Ovary (tissue), 10 donors: ENCODE measurements at regions of chr22 and their contacts with region 1.

Region 1: DNA sequence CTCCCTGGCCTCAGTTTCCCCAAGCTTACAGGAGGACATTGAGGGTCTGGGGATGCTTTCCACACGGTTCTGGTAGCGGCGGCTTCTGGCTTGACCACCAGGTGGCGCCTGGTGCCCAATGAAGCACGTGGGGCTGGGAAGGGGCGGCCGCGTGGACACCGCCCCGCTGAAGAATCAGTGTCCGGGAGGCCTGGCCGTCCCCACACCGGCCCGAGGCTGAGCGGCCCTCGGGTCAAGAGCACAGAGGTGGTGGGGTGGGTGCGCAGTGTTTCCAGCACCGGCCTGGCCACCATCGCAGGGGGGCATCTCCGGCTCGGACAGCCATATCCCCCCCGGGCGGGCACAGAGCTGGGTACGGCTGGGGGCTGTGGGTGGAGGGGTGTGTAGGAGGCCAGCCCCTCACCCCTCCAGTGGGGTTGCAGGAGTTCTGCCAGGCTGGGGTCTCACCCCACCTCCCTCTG is 27.8 kb upstream of the PPARA start:
- DNase-seq: peak; percentile 80 to 91 (median 88)
- H3K4me3 ChIP-seq: no peak overlapping the region
- H3K27ac ChIP-seq: peak overlapping the region in 1 of 2 donors; percentile 51
- H3K4me1 ChIP-seq: peaks cover 19% of the 10 kb centered on the region
- H3K27me3 ChIP-seq: no peaks in the 10 kb centered on the region
- CTCF ChIP-seq: peak; percentile 97 to 99 (median 97)
- EP300 ChIP-seq: no peak
- POLR2A ChIP-seq: peak; percentile 29

Region 2: GRCh38 chr22:46267431-46268279 is 145.1 kb after region 1 on chr22 and contains the start of gene TTC38:
- intact Hi-C with region 1: loop called in 1 of 4 experiments (anchors 10 kb)
- DNase-seq: peak; percentile 90 to 93 (median 91)
- H3K4me3 ChIP-seq: peak within 1 kb of the TSS; percentile 79
- H3K27ac ChIP-seq: peak within 1 kb of the TSS; percentile 74 to 81
- H3K4me1 ChIP-seq: peaks cover 9% of the 10 kb centered on the region
- H3K27me3 ChIP-seq: no peaks in the 10 kb centered on the region
- CTCF ChIP-seq: no peak
- EP300 ChIP-seq: no peak
- POLR2A ChIP-seq: peak; percentile 49
- total RNA-seq, gene TTC38: 32.2 to 58.3 (median 44.6) TPM

Region 3: GRCh38 chr22:46309526-46310085 is 187.1 kb after region 1 on chr22:
- intact Hi-C with region 1: loop called (anchors 2 to 5 kb)
- DNase-seq: no peak
- H3K4me3 ChIP-seq: no peak overlapping the region
- H3K27ac ChIP-seq: no peak overlapping the region
- H3K4me1 ChIP-seq: no peaks in the 10 kb centered on the region
- H3K27me3 ChIP-seq: no peaks in the 10 kb centered on the region
- CTCF ChIP-seq: no peak
- EP300 ChIP-seq: no peak
- POLR2A ChIP-seq: no peak

Region 4: GRCh38 chr22:46315976-46316375 is 193.4 kb after region 1 on chr22:
- intact Hi-C with region 1: loop called (anchors 2 to 5 kb)
- DNase-seq: no peak
- H3K4me3 ChIP-seq: no peak overlapping the region
- H3K27ac ChIP-seq: no peak overlapping the region
- H3K4me1 ChIP-seq: no peaks in the 10 kb centered on the region
- H3K27me3 ChIP-seq: no peaks in the 10 kb centered on the region
- CTCF ChIP-seq: no peak
- EP300 ChIP-seq: no peak
- POLR2A ChIP-seq: no peak

Region 5: GRCh38 chr22:46390652-46391301 is 268.2 kb after region 1 on chr22:
- intact Hi-C with region 1: loop called in 1 of 4 experiments (anchors 5 kb)
- DNase-seq: peak; percentile 55 to 76 (median 68)
- H3K4me3 ChIP-seq: no peak overlapping the region
- H3K27ac ChIP-seq: no peak overlapping the region
- H3K4me1 ChIP-seq: peaks cover 3% of the 10 kb centered on the region
- H3K27me3 ChIP-seq: no peaks in the 10 kb centered on the region
- CTCF ChIP-seq: peak in 2 of 3 donors; percentile 18 to 24
- EP300 ChIP-seq: no peak
- POLR2A ChIP-seq: no peak

Region 6: GRCh38 chr22:46542011-46542985 is 419.8 kb after region 1 on chr22:
- intact Hi-C with region 1: loop called (anchors 5 to 10 kb)
- DNase-seq: peak; percentile 33 to 74 (median 57)
- H3K4me3 ChIP-seq: no peak overlapping the region
- H3K27ac ChIP-seq: no peak overlapping the region
- H3K4me1 ChIP-seq: no peaks in the 10 kb centered on the region
- H3K27me3 ChIP-seq: no peaks in the 10 kb centered on the region
- CTCF ChIP-seq: peak; percentile 41 to 58 (median 53)
- EP300 ChIP-seq: no peak
- POLR2A ChIP-seq: no peak